ENCODE measurements at regions of chr4 and their contacts with region 1.

Region 1: DNA sequence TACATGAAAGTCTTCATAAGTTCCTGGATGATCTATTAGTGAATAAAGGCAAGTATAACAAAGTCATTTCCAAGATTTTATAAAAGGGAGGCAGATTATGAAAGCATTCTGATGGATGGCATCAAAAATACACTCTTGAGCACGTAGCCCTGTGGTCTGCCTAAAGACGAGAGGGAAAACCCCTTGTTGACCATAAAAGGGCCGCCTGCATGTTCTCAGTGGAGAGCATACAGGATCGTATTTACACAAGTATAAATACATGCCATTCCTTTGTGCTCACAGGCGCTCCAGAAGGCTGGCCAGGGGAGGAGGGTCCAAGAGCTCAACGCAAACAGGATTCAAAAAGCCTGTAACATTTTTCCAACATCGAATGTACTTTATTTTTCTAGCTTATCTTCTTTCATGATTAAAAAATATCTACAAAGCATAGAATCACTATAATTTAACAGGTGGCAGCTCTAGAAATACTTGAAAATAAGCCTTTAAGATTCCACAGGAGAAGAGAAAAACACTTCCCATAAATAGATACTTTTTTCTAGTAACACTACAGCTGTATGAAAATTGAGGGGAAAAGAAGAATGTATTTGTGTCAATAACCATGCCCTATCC is 29.6 kb downstream of the PDGFC start:
- DNase-seq: peak; percentile 13 to 54
- ATAC-seq: peak; percentile 71

Region 2: DNA sequence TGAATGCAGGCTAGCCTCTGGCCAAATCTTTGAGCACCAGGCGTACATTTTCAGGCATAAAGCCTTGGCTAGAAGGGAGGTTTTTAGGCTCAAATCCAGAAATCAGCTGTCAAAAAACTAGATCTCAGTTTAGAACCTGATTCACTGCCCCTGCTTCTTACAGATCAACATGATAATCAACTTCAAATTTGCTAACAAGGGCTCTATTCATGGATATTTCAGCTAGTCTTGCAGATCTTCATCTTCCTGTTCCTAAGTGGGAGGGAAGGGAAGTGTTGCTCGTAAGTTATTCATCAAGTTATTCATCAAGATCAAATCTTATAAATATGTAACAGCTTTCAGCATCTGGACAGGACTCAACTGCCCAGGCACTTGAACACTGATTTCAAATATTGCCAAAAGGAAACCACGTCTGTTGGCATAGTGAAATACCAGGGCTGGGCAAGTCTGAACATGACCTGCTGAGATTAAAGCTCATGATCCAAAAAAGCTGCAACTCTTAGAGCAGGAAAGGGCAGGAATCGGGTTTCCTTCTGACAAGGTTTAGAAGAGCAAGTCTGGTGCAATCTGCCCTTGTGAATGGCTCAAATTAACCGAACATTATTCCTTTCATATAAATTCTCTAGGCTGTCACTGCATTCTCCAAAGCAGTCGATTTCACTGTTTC is 170.7 kb before region 1 on chr4:
- intact Hi-C with region 1: loop called in 1 of 2 experiments (anchors 10 kb)
- DNase-seq: no peak
- ATAC-seq: no peak

Measured in left colon (tissue), 2 donors.